IMR-90 (cell line): ENCODE measurements at regions of chr20 and their contacts with region 1.

Region 1: DNA sequence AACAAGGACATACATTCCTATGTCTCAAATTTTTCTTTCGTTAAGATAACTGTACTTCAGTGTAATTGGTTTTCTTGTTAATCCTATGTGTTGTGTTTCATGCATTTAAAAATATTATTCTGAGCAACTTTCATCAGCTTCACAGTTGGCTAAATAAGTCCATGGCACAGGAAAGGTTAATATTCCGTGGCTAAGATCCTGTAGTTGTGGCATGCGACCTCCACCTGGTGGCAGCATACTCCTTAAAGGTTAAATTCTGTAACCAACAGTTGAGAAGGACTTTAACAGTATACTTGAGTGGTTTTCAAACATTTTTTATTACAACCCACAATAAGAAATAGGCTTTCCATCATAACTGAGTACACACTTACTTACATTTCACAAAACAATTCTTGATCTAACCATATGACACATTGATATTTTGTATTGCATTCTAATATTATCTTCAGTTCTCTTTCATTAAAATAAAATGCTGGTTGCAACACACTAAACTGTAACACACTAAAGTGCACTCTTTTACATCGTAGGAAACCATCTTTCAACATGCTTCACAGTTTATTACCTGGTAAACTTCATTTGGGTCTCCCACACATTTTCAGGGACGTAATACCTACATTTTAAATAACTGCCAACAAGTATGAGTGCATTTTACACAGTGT is 118.3 kb downstream of the SLX4IP start:
- DNase-seq: peak; percentile 82
- ATAC-seq: peak; percentile 88
- H3K4me3 ChIP-seq: no peak overlapping the region
- H3K27ac ChIP-seq: no peak overlapping the region
- H3K4me1 ChIP-seq: peaks cover 11% of the 10 kb centered on the region
- H3K27me3 ChIP-seq: no peaks in the 10 kb centered on the region
- CTCF ChIP-seq: peak; percentile 85
- POLR2A ChIP-seq: 0 out of 2 replicates have a peak, but pooled peaks have one; percentile 25
- RAD21 ChIP-seq: peak; percentile 95

Region 2: GRCh38 chr20:10864076-10864918 is 310.8 kb after region 1 on chr20:
- CTCF ChIA-PET with region 1: no interaction called
- POLR2A ChIA-PET with region 1: no interaction called
- dilution Hi-C with region 1: no loop called
- in situ Hi-C with region 1: no loop called
- intact Hi-C with region 1: loop called (anchors 10 kb)
- DNase-seq: no peak
- ATAC-seq: peak; percentile 24
- H3K4me3 ChIP-seq: no peak overlapping the region
- H3K27ac ChIP-seq: peak overlapping the region; percentile 51; the same call in 1 of the 2 replicates
- H3K4me1 ChIP-seq: peaks cover 13% of the 10 kb centered on the region
- H3K27me3 ChIP-seq: no peaks in the 10 kb centered on the region; the same call in 1 of the 2 replicates
- CTCF ChIP-seq: no peak
- POLR2A ChIP-seq: no peak
- RAD21 ChIP-seq: no peak

Region 3: GRCh38 chr20:11204926-11205768 is 651.7 kb after region 1 on chr20:
- CTCF ChIA-PET with region 1: no interaction called
- POLR2A ChIA-PET with region 1: no interaction called
- dilution Hi-C with region 1: no loop called
- in situ Hi-C with region 1: no loop called
- intact Hi-C with region 1: loop called (anchors 2 kb)
- DNase-seq: peak; percentile 71
- ATAC-seq: peak; percentile 90
- H3K4me3 ChIP-seq: no peak overlapping the region
- H3K27ac ChIP-seq: no peak overlapping the region
- H3K4me1 ChIP-seq: no peaks in the 10 kb centered on the region; the same call in none of the 2 replicates
- H3K27me3 ChIP-seq: no peaks in the 10 kb centered on the region
- CTCF ChIP-seq: peak; percentile 72
- POLR2A ChIP-seq: no peak
- RAD21 ChIP-seq: peak; percentile 77

Region 4: GRCh38 chr20:11274141-11274594 is 720.7 kb after region 1 on chr20:
- CTCF ChIA-PET with region 1: interaction called, 3 read pairs
- POLR2A ChIA-PET with region 1: no interaction called
- dilution Hi-C with region 1: no loop called
- in situ Hi-C with region 1: loop called (anchors 5 kb)
- intact Hi-C with region 1: loop called (anchors 1 kb)
- DNase-seq: peak; percentile 79
- ATAC-seq: peak; percentile 94
- H3K4me3 ChIP-seq: no peak overlapping the region
- H3K27ac ChIP-seq: no peak overlapping the region
- H3K4me1 ChIP-seq: no peaks in the 10 kb centered on the region
- H3K27me3 ChIP-seq: no peaks in the 10 kb centered on the region
- CTCF ChIP-seq: peak; percentile 78
- POLR2A ChIP-seq: no peak
- RAD21 ChIP-seq: peak; percentile 90

Region 5: GRCh38 chr20:11350126-11351005 is 796.9 kb after region 1 on chr20:
- CTCF ChIA-PET with region 1: no interaction called
- POLR2A ChIA-PET with region 1: no interaction called
- dilution Hi-C with region 1: no loop called
- in situ Hi-C with region 1: no loop called
- intact Hi-C with region 1: loop called (anchors 10 kb)
- DNase-seq: peak; percentile 80
- ATAC-seq: peak; percentile 86
- H3K4me3 ChIP-seq: no peak overlapping the region
- H3K27ac ChIP-seq: peak overlapping the region; percentile 28; the same call in 1 of the 2 replicates
- H3K4me1 ChIP-seq: peaks cover 10% of the 10 kb centered on the region
- H3K27me3 ChIP-seq: no peaks in the 10 kb centered on the region
- CTCF ChIP-seq: 0 out of 2 replicates have a peak, but pooled peaks have one; percentile 25
- POLR2A ChIP-seq: no peak
- RAD21 ChIP-seq: peak; percentile 30; the same call in 1 of the 2 replicates